Tibial artery (tissue), 4 donors: ENCODE measurements at regions of chr7 and their contacts with region 1.

Region 1: GRCh38 chr7:45923290-45923689 is 2.2 kb upstream of the IGFBP3 start:
- DNase-seq: peak; percentile 74 to 88
- H3K4me3 ChIP-seq: peak overlapping the region; percentile 64 to 67
- H3K27ac ChIP-seq: peak overlapping the region; percentile 73 to 74
- H3K4me1 ChIP-seq: peaks cover 0 to 61% (median 46%) of the 10 kb centered on the region in 4 donors
- H3K27me3 ChIP-seq: no peaks in the 10 kb centered on the region
- CTCF ChIP-seq: peak; percentile 82 to 92

Region 2: DNA sequence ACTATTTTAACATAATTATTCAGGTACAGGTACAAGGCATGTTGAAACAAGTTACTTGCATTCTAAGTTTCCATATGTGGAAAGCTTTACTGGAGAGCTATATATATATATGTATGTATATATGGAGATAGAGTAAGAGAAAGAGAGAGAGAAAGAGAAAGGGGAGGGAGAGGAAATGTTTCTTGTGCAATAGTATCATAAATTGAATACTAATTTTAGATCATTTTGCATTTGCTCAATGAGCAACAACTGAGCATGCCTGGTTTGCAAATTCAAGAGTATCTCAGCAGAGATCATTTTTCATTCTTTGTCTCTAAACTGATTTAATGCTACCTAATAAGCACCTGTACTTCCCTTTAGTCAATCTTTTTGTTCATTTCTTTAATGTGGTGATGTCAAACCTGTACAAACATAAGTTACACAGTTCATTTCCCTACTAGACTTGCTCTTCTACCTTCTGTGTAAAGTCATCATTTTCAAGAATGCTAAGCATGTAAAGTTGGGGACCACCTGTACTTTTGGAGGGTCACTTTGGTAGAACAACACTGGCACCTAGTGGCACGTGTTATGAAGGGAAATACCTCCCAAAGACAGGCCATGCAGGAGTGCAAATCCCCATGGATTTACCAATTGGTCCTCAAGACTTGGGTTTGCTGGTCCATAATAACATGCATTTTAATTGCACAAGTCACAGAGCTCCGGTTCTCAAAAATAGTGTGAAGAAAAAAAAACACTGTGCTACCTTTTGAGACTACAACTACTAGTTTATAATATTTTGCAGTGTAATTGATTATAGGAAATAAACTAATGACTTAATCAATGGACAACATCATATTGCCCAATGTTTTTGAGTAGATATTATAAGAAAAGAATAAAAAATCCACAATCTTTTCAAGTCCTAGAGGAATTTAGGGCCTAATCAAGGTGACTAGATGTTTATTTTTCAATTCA is 429.0 kb after region 1 on chr7:
- intact Hi-C with region 1: loop called (anchors 2 kb)
- DNase-seq: no peak
- H3K4me3 ChIP-seq: no peak overlapping the region
- H3K27ac ChIP-seq: no peak overlapping the region
- H3K4me1 ChIP-seq: no peaks in the 10 kb centered on the region
- H3K27me3 ChIP-seq: no peaks in the 10 kb centered on the region
- CTCF ChIP-seq: peak; percentile 39 to 67

Region 3: GRCh38 chr7:46752881-46753366 is 829.6 kb after region 1 on chr7:
- intact Hi-C with region 1: loop called (anchors 5 kb)
- DNase-seq: no peak
- H3K4me3 ChIP-seq: no peak overlapping the region
- H3K27ac ChIP-seq: peak overlapping the region; percentile 74 to 80
- H3K4me1 ChIP-seq: peaks cover 0 to 72% (median 40%) of the 10 kb centered on the region in 4 donors
- H3K27me3 ChIP-seq: no peaks in the 10 kb centered on the region
- CTCF ChIP-seq: no peak

Region 4: GRCh38 chr7:47254081-47255006 is 1331.1 kb after region 1 on chr7:
- intact Hi-C with region 1: loop called (anchors 5 kb)
- DNase-seq: peak; percentile 80 to 92
- H3K4me3 ChIP-seq: peak overlapping the region; percentile 55 to 59
- H3K27ac ChIP-seq: peak overlapping the region; percentile 76
- H3K4me1 ChIP-seq: peaks cover 0 to 26% (median 13%) of the 10 kb centered on the region in 4 donors
- H3K27me3 ChIP-seq: no peaks in the 10 kb centered on the region
- CTCF ChIP-seq: peak; percentile 90 to 97